ENCODE measurements at regions of chr10 and their contacts with region 1.

Region 1: DNA sequence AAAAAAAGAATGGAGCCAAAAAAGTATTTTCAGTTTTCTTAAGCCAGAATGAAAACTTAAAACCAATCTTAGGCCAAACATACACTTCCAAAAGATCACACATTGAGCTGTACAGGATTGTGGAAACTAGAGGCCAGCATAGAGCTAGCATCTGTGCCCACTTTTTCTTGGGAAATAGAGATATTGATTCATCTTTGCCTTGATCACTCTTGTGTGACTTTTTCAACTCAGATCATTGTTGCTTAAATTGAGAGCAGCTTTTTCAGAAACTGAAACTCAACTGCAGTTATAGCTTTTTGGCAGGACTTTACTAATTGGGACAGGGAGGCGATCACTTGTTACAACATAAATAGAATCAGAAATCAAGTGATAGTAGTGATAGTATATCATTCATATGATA is 132.2 kb downstream of the PRKG1 start:
- DNase-seq: no peak
- H3K4me3 ChIP-seq: no peak overlapping the region
- H3K4me3 Mint-ChIP-seq: no peak overlapping the region
- H3K27ac Mint-ChIP-seq: no peak overlapping the region
- H3K4me1 ChIP-seq: no peaks in the 10 kb centered on the region
- H3K4me1 Mint-ChIP-seq: no peaks in the 10 kb centered on the region
- H3K27me3 ChIP-seq: no peaks in the 10 kb centered on the region
- H3K27me3 Mint-ChIP-seq: peaks cover 9% of the 10 kb centered on the region
- CTCF ChIP-seq: no peak

Region 2: DNA sequence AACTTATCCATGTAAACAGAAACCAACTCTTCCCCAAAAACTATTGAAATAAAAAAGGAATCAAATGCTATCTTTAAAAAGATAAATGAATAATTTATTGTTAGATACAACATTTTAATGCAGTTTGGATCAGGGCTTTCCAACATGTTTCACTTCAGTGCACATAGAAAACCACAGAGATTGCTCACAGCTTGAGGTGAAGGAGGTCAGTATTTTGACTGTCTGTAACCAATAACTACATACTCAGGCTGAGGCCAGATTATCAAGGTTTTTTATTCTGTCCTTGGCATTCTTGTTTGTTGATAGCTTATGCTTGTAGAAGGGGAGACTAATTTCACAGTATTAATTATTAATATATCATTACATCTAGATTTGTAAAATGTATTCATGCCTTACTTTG is 63.3 kb after region 1 on chr10:
- CTCF ChIA-PET with region 1: no interaction called
- POLR2A ChIA-PET with region 1: no interaction called
- intact Hi-C with region 1: loop called (anchors 10 kb)
- DNase-seq: no peak
- H3K4me3 ChIP-seq: no peak overlapping the region
- H3K4me3 Mint-ChIP-seq: no peak overlapping the region
- H3K27ac Mint-ChIP-seq: no peak overlapping the region
- H3K4me1 ChIP-seq: no peaks in the 10 kb centered on the region
- H3K4me1 Mint-ChIP-seq: no peaks in the 10 kb centered on the region
- H3K27me3 ChIP-seq: no peaks in the 10 kb centered on the region
- H3K27me3 Mint-ChIP-seq: peaks cover 5% of the 10 kb centered on the region
- CTCF ChIP-seq: no peak

Measured in Caco-2 (cell line).